Activated B cell treated with CpG ODN at 0.5 μM for 24 hours (primary cell): ENCODE measurements at regions of chr3 and their contacts with region 1.

Region 1: DNA sequence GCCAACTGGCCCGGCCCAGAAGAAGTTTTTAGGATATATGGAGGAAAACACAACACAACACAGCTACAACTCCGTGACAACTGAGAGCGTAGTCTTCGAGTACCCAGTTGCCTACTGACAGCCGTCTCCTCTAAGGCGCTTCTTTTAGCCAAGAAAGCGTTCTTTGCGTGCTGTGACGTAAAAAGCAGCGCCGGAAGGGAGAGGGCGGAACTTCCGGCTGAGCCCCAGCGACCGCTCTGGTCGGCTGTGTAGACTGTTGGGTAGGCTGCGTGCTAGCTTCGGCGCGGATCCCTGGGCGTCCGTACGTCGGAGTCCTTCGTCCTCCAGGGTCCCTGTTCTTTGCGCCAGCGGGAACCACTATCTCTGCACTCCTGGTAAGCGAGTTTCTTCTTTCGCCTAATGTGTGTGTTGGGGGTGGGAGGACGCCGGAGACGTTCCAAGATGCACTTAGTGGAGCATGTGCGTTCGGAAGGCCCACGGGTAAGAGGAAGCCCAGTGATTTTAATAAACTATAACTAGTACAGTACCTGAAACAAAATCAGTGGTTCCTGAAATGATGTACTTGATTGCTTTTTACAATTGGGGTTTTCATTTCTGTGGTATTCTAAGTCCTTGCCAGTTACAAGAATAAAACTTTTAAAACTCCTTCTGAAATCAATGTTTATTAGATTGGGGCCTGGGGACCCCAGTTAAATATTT is at the start of gene TRMT10C:
- DNase-seq: peak; percentile 88
- ATAC-seq: peak; percentile 96
- H3K4me3 Mint-ChIP-seq: peak within 1 kb of the TSS; percentile 99
- H3K27ac Mint-ChIP-seq: peak within 1 kb of the TSS; percentile 95
- H3K4me1 Mint-ChIP-seq: peaks cover 42% of the 10 kb centered on the region
- H3K27me3 Mint-ChIP-seq: peaks cover 4% of the 10 kb centered on the region
- CTCF ChIP-seq: no peak
- total RNA-seq, gene TRMT10C: 33.5 and 34.6 TPM in 2 replicates

Region 2: GRCh38 chr3:101391413-101391950 is 170.3 kb before region 1 on chr3:
- CTCF ChIA-PET with region 1: no interaction called
- POLR2A ChIA-PET with region 1: interaction called, 14 read pairs
- intact Hi-C with region 1: no loop called
- DNase-seq: no peak
- ATAC-seq: no peak
- H3K4me3 Mint-ChIP-seq: no peak overlapping the region
- H3K27ac Mint-ChIP-seq: peak overlapping the region; percentile 31
- H3K4me1 Mint-ChIP-seq: peaks cover 19% of the 10 kb centered on the region
- H3K27me3 Mint-ChIP-seq: no peaks in the 10 kb centered on the region
- CTCF ChIP-seq: no peak

Region 3: GRCh38 chr3:101512646-101513418 is 48.9 kb before region 1 on chr3 and contains the start of gene SENP7:
- CTCF ChIA-PET with region 1: no interaction called
- POLR2A ChIA-PET with region 1: interaction called, 28 read pairs
- intact Hi-C with region 1: loop called (anchors 1 kb)
- DNase-seq: peak; percentile 74
- ATAC-seq: peak; percentile 72
- H3K4me3 Mint-ChIP-seq: peak within 1 kb of the TSS; percentile 98
- H3K27ac Mint-ChIP-seq: peak within 1 kb of the TSS; percentile 99
- H3K4me1 Mint-ChIP-seq: peaks cover 35% of the 10 kb centered on the region
- H3K27me3 Mint-ChIP-seq: no peaks in the 10 kb centered on the region
- CTCF ChIP-seq: no peak
- total RNA-seq, gene SENP7: 18.6 and 22.1 TPM in 2 replicates

Region 4: DNA sequence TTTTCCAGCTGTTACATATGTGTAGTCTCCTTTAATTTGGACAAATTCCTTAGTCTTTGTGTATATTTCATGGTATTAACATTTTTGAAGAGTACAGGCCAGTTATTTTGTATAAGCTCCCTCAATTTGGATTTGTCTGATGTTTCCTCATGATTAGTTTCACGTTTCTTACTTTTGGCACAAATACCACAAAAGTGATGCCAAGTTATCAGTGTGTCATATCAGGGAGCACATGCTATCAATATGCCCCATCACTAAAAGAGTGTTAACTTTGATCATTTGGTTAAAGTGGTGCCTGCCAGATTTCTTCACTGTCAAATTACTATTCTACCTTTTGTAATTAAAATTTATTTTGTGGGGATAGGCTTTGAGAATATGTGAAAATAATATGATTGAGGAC is 26.8 kb after region 1 on chr3:
- CTCF ChIA-PET with region 1: no interaction called
- POLR2A ChIA-PET with region 1: no interaction called
- intact Hi-C with region 1: no loop called
- DNase-seq: no peak
- ATAC-seq: no peak
- H3K4me3 Mint-ChIP-seq: no peak overlapping the region
- H3K27ac Mint-ChIP-seq: no peak overlapping the region
- H3K4me1 Mint-ChIP-seq: no peaks in the 10 kb centered on the region
- H3K27me3 Mint-ChIP-seq: no peaks in the 10 kb centered on the region
- CTCF ChIP-seq: no peak

Region 5: GRCh38 chr3:101611023-101611422 is 49.2 kb after region 1 on chr3:
- CTCF ChIA-PET with region 1: no interaction called
- POLR2A ChIA-PET with region 1: no interaction called
- intact Hi-C with region 1: no loop called
- DNase-seq: no peak
- ATAC-seq: peak; percentile 40
- H3K4me3 Mint-ChIP-seq: no peak overlapping the region
- H3K27ac Mint-ChIP-seq: no peak overlapping the region
- H3K4me1 Mint-ChIP-seq: peaks cover 13% of the 10 kb centered on the region
- H3K27me3 Mint-ChIP-seq: no peaks in the 10 kb centered on the region
- CTCF ChIP-seq: no peak

Region 6: GRCh38 chr3:101676765-101677435 is 115.1 kb after region 1 on chr3 and contains the start of gene ZBTB11:
- CTCF ChIA-PET with region 1: no interaction called
- POLR2A ChIA-PET with region 1: interaction called, 17 read pairs
- intact Hi-C with region 1: loop called (anchors 1 kb)
- DNase-seq: peak; percentile 99
- ATAC-seq: peak; percentile 68
- H3K4me3 Mint-ChIP-seq: peak within 1 kb of the TSS; percentile 93
- H3K27ac Mint-ChIP-seq: peak within 1 kb of the TSS; percentile 96
- H3K4me1 Mint-ChIP-seq: peaks cover 56% of the 10 kb centered on the region
- H3K27me3 Mint-ChIP-seq: no peaks in the 10 kb centered on the region
- CTCF ChIP-seq: no peak
- total RNA-seq, gene ZBTB11: 26.2 and 28.7 TPM in 2 replicates

Region 7: GRCh38 chr3:101685870-101686412 is 124.2 kb after region 1 on chr3:
- CTCF ChIA-PET with region 1: no interaction called
- POLR2A ChIA-PET with region 1: interaction called, 14 read pairs
- intact Hi-C with region 1: loop called (anchors 1 kb)
- DNase-seq: no peak
- ATAC-seq: peak; percentile 6
- H3K4me3 Mint-ChIP-seq: peak overlapping the region; percentile 100
- H3K27ac Mint-ChIP-seq: peak overlapping the region; percentile 99
- H3K4me1 Mint-ChIP-seq: peaks cover 40% of the 10 kb centered on the region
- H3K27me3 Mint-ChIP-seq: no peaks in the 10 kb centered on the region
- CTCF ChIP-seq: no peak